ENCODE measurements at regions of chr7 and their contacts with region 1.

Region 1: GRCh38 chr7:48109848-48110663 is 21.0 kb downstream of the UPP1 start:
- DNase-seq: peak; percentile 85
- H3K4me3 ChIP-seq: no peak overlapping the region; a peak in 1 of 4 replicates
- H3K27ac ChIP-seq: no peak overlapping the region
- H3K4me1 ChIP-seq: peaks cover 0 to 4% of the 10 kb centered on the region in 2 experiments; a peak in 1 of 4 replicates
- H3K27me3 ChIP-seq: no peaks in the 10 kb centered on the region
- CTCF ChIP-seq: peak; percentile 100
- EP300 ChIP-seq: no peak
- RAD21 ChIP-seq: peak; percentile 95

Region 2: GRCh38 chr7:47932016-47932415 is 178.0 kb before region 1 on chr7:
- CTCF ChIA-PET with region 1: interaction called, 39 read pairs
- POLR2A ChIA-PET with region 1: no interaction called
- DNase-seq: no peak
- H3K4me3 ChIP-seq: no peak overlapping the region
- H3K27ac ChIP-seq: no peak overlapping the region
- H3K4me1 ChIP-seq: peaks cover 4 to 12% of the 10 kb centered on the region in 2 experiments; a peak in 2 of 4 replicates
- H3K27me3 ChIP-seq: no peaks in the 10 kb centered on the region
- CTCF ChIP-seq: no peak
- EP300 ChIP-seq: no peak
- RAD21 ChIP-seq: no peak

Region 3: GRCh38 chr7:47954231-47954911 is 155.7 kb before region 1 on chr7:
- CTCF ChIA-PET with region 1: interaction called, 27 read pairs
- POLR2A ChIA-PET with region 1: no interaction called
- DNase-seq: no peak
- H3K4me3 ChIP-seq: no peak overlapping the region
- H3K27ac ChIP-seq: no peak overlapping the region
- H3K4me1 ChIP-seq: peaks cover 4 to 5% of the 10 kb centered on the region in 2 experiments; a peak in 1 of 4 replicates
- H3K27me3 ChIP-seq: no peaks in the 10 kb centered on the region
- CTCF ChIP-seq: no peak
- EP300 ChIP-seq: no peak
- RAD21 ChIP-seq: no peak

Region 4: GRCh38 chr7:47991741-47992311 is 118.2 kb before region 1 on chr7:
- CTCF ChIA-PET with region 1: interaction called, 18 read pairs
- POLR2A ChIA-PET with region 1: no interaction called
- DNase-seq: peak; percentile 59
- H3K4me3 ChIP-seq: no peak overlapping the region
- H3K27ac ChIP-seq: no peak overlapping the region
- H3K4me1 ChIP-seq: no peaks in the 10 kb centered on the region; a peak in 1 of 4 replicates
- H3K27me3 ChIP-seq: no peaks in the 10 kb centered on the region; the same call in 1 of the 2 replicates
- CTCF ChIP-seq: peak; percentile 51
- EP300 ChIP-seq: no peak
- RAD21 ChIP-seq: peak; percentile 49

Region 5: DNA sequence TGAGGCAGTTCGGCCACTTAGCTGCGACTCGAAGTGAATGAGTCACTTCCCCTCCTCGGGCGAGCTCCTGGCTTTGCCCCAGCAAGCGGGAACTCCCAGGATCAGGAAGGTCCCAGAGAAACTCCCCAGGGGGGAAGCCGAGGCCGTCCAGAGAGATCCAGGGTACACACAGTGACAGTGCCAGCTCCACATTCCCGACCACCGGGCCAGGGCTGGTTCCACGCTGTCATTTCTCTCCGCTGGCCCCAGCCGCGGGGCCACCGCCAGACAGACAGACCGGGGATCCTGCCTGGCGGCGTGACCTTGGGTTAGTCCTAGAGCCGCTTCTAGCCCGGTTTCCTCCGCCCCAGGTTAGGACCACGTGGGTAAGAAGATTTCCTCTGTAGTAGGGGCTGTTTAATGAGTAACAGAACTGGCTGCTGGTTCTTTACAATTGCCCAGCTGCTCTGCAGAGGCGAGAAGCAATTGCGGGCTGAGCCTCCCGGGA is 21.5 kb before region 1 on chr7:
- CTCF ChIA-PET with region 1: interaction called, 63 read pairs
- POLR2A ChIA-PET with region 1: no interaction called
- DNase-seq: no peak
- H3K4me3 ChIP-seq: peak overlapping the region; percentile 77 to 82
- H3K27ac ChIP-seq: peak overlapping the region; percentile 51 to 100; a peak in 3 of 4 replicates
- H3K4me1 ChIP-seq: peaks cover 20 to 42% of the 10 kb centered on the region in 2 experiments
- H3K27me3 ChIP-seq: no peaks in the 10 kb centered on the region
- CTCF ChIP-seq: no peak
- EP300 ChIP-seq: peak in 1 of 2 experiments; percentile 81; a peak in 1 of 4 replicates
- RAD21 ChIP-seq: no peak

Region 6: GRCh38 chr7:48139459-48139858 is 29.4 kb after region 1 on chr7:
- CTCF ChIA-PET with region 1: interaction called, 21 read pairs
- POLR2A ChIA-PET with region 1: no interaction called
- DNase-seq: no peak
- H3K4me3 ChIP-seq: no peak overlapping the region
- H3K27ac ChIP-seq: no peak overlapping the region
- H3K4me1 ChIP-seq: peaks cover 0 to 2% of the 10 kb centered on the region in 2 experiments; a peak in 1 of 4 replicates
- H3K27me3 ChIP-seq: peaks cover 8% of the 10 kb centered on the region; the same call in 1 of the 2 replicates
- CTCF ChIP-seq: peak; percentile 58
- EP300 ChIP-seq: no peak
- RAD21 ChIP-seq: peak; percentile 35; the same call in 1 of the 2 replicates